CD4-positive, alpha-beta T cell (primary cell): ENCODE measurements at regions of chr11 and their contacts with region 1.

Region 1: DNA sequence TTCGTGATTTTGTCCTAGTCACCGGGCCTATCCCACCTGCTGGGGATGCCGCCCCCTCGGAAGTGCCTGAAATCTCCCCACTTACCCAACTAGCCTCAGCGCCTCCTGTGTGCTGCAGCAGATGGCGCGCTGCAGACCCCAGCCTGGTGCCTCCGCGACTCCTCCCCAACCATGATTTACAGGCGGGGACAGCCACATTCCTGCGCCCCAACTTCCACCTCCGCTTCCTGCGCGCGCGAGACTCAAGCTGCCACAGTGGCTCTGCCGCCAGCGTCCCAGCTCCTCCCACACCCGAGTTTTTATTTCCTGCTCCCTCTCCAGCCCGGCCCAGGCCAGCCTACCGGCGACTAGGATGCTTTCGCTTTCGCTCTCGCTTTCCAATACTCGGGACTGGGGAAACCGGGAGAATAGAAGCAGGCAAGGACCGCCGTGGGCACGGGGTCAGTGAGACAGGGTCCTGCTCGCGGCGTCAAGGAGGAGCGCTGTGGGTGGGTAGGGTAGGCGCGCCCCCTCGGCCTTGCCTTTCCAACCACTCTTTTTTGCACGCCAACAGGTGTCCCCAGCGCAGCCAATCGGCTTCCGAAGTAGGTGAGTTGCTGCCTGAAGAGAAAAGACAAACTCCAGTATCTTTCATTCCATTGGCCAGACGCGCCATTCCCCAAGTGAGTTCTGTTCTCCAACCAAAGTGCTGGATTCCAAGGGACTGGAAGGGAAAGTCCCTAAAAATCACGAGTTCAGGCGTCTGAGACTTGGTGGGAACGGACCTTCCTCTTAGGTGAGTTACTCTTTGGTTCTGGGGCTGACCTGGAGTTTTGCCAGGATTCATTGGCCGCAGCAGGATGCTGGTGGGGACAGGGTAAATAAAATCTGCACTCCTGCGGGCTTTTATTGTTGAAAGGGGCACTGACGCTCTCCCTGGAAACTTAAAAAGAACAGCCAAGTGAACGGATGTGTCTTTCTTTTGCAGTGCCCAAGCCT is at the start of gene FAM111A:
- DNase-seq: peak; percentile 67 to 95 (median 82)
- ATAC-seq: peak; percentile 81
- H3K4me3 ChIP-seq: peak within 1 kb of the TSS; percentile 79
- H3K4me3 Mint-ChIP-seq: peak within 1 kb of the TSS; percentile 94
- H3K27ac ChIP-seq: peak within 1 kb of the TSS; percentile 80 to 91
- H3K27ac Mint-ChIP-seq: peak within 1 kb of the TSS; percentile 90
- H3K4me1 ChIP-seq: peaks cover 23% of the 10 kb centered on the region
- H3K4me1 Mint-ChIP-seq: peaks cover 50% of the 10 kb centered on the region
- H3K27me3 ChIP-seq: no peaks in the 10 kb centered on the region
- H3K27me3 Mint-ChIP-seq: no peaks in the 10 kb centered on the region
- CTCF ChIP-seq: no peak
- total RNA-seq, gene FAM111A: 32.8 to 34.4 TPM

Region 2: GRCh38 chr11:57324886-57325734 is 1817.7 kb before region 1 on chr11 and contains the start of gene TNKS1BP1:
- CTCF ChIA-PET with region 1: no interaction called
- POLR2A ChIA-PET with region 1: no interaction called
- intact Hi-C with region 1: loop called (anchors 10 kb)
- DNase-seq: peak; percentile 76 to 95 (median 87)
- ATAC-seq: peak; percentile 90
- H3K4me3 ChIP-seq: peak within 1 kb of the TSS; percentile 80
- H3K4me3 Mint-ChIP-seq: peak within 1 kb of the TSS; percentile 93
- H3K27ac ChIP-seq: peak within 1 kb of the TSS; percentile 82 to 84
- H3K27ac Mint-ChIP-seq: peak within 1 kb of the TSS; percentile 95
- H3K4me1 ChIP-seq: peaks cover 30% of the 10 kb centered on the region
- H3K4me1 Mint-ChIP-seq: peaks cover 45% of the 10 kb centered on the region
- H3K27me3 ChIP-seq: no peaks in the 10 kb centered on the region
- H3K27me3 Mint-ChIP-seq: no peaks in the 10 kb centered on the region
- CTCF ChIP-seq: no peak
- total RNA-seq, gene TNKS1BP1: 12.9 to 13.2 TPM

Region 3: DNA sequence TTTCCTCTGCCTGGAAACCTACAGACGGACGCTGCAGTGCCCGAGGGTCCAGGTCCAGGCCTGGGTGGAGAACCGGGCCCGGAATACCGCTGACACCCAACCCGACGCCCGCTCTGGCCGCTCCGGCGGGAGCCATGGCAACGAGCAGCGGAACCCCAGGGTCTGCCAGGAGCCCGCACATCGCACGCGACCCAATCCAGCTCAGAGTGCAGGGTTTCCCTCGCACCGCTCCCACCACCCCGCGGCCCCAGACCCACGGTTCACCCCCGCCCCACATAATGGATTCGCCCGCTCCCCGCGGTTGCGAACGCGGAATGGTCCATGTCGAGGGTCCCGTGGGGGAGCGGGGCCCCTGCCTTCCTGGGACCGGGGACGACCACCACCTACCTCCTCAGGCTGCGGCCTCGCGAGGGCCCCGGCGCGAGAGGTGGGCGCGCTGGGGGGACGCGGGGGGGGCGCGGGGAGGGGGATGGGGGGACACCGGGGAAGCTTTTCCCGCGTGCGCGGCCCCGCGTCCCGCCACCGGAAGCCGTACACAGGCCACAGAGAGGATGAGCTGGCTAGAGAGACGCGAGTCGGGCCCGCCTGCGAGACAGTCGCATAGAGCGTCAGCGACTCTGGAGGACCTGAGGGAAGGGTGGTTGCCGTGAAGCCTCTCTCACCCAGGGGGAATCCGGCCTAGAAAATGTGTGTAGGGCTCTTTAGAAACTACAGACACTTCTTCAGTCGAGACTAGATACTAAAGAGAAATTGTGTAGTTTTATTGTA is 1807.3 kb before region 1 on chr11 and contains the start of gene SSRP1:
- CTCF ChIA-PET with region 1: no interaction called
- POLR2A ChIA-PET with region 1: no interaction called
- intact Hi-C with region 1: loop called in 1 of 2 experiments (anchors 10 kb)
- DNase-seq: peak; percentile 77 to 95 (median 86)
- ATAC-seq: peak; percentile 97
- H3K4me3 ChIP-seq: peak within 1 kb of the TSS; percentile 80
- H3K4me3 Mint-ChIP-seq: peak within 1 kb of the TSS; percentile 89
- H3K27ac ChIP-seq: peak within 1 kb of the TSS; percentile 72 to 85
- H3K27ac Mint-ChIP-seq: peak within 1 kb of the TSS; percentile 96
- H3K4me1 ChIP-seq: peaks cover 29% of the 10 kb centered on the region
- H3K4me1 Mint-ChIP-seq: peaks cover 33% of the 10 kb centered on the region
- H3K27me3 ChIP-seq: no peaks in the 10 kb centered on the region
- H3K27me3 Mint-ChIP-seq: no peaks in the 10 kb centered on the region
- CTCF ChIP-seq: no peak
- total RNA-seq, gene SSRP1: 36.7 to 41.2 TPM

Region 4: DNA sequence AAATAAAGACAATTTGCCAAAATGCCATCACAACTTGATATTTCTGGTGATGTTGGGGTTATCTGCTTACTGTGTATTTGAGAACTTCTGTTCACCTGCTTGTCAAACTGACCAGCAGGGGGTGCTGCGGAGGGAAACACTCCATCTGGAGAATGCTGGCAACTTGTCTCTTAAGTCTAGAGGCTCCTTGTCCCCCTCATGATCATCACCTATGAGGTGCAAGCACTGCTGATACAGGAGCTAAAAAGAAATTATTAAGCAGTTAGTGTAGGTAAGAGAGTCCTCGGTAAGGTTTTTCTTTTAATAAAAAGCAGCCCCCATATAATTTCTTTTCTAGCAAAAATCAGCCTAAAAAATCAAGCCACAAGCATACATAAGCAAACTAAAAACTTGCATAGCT is 89.4 kb before region 1 on chr11:
- CTCF ChIA-PET with region 1: interaction called, 12 read pairs
- POLR2A ChIA-PET with region 1: no interaction called
- intact Hi-C with region 1: no loop called
- DNase-seq: peak; percentile 68 to 88 (median 76)
- ATAC-seq: peak; percentile 68
- H3K4me3 ChIP-seq: no peak overlapping the region
- H3K4me3 Mint-ChIP-seq: no peak overlapping the region
- H3K27ac ChIP-seq: no peak overlapping the region
- H3K27ac Mint-ChIP-seq: no peak overlapping the region
- H3K4me1 ChIP-seq: peaks cover 6% of the 10 kb centered on the region
- H3K4me1 Mint-ChIP-seq: peaks cover 7% of the 10 kb centered on the region
- H3K27me3 ChIP-seq: no peaks in the 10 kb centered on the region
- H3K27me3 Mint-ChIP-seq: peaks cover 28% of the 10 kb centered on the region
- CTCF ChIP-seq: peak; percentile 78

Region 5: GRCh38 chr11:59076876-59077571 is 65.8 kb before region 1 on chr11:
- CTCF ChIA-PET with region 1: no interaction called
- POLR2A ChIA-PET with region 1: no interaction called
- intact Hi-C with region 1: no loop called
- DNase-seq: no peak
- ATAC-seq: no peak
- H3K4me3 ChIP-seq: no peak overlapping the region
- H3K4me3 Mint-ChIP-seq: no peak overlapping the region
- H3K27ac ChIP-seq: no peak overlapping the region
- H3K27ac Mint-ChIP-seq: no peak overlapping the region
- H3K4me1 ChIP-seq: no peaks in the 10 kb centered on the region
- H3K4me1 Mint-ChIP-seq: peaks cover 12% of the 10 kb centered on the region
- H3K27me3 ChIP-seq: peaks cover 0 to 14% of the 10 kb centered on the region in 2 experiments
- H3K27me3 Mint-ChIP-seq: peaks cover 56% of the 10 kb centered on the region
- CTCF ChIP-seq: no peak

Region 6: DNA sequence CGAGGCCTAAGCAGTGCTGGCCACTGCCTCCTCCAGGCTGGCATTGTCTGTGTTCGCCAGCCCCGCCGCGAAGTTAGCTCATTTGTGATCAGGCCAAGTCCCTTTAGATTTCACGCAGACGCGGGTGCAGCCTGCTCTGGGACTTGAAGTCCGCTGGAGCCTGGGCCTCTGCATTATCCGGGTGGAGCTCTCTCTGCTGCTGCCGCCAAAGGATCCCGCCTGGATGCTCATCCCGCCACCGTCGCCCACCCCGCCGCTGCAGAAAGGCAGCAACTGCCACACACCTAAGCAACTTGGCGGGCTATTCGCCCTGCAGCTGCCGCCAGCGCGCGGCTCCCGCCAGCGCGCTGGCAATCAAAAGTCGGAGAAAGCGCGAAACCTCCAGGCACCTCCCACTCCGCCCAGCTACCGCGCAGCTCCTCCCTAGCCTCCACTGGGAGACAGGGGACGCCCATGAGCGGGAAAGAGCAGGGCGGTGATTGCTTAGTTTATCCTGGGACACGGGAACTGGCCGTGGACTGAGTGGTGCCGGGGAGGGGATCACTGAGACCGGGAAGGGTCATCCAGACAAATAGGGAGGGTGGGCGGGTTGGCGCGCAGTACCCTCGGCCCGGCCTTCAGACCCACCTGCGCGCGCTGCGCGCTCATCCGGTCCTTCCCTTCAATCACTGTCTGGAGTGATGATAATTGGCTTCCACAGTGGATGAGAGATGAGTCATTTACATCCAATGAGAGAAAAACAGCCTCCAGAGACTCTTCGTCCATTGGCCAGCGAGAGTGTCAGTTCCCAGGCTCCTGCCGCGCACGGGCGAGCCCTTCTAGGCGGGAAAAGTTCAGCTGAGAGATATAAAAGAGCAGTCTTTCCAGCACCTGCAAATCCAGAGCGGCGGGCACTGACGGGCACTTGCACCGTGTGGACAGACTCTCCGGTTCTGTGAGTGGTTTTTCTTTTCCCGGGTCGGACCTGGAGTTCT is 36.2 kb before region 1 on chr11 and contains the start of gene FAM111B:
- CTCF ChIA-PET with region 1: interaction called, 6 read pairs
- POLR2A ChIA-PET with region 1: interaction called, 7 read pairs
- intact Hi-C with region 1: loop called in 1 of 2 experiments (anchors 2 kb)
- DNase-seq: peak; percentile 16 to 85 (median 48)
- ATAC-seq: peak; percentile 82
- H3K4me3 ChIP-seq: peak within 1 kb of the TSS; percentile 68
- H3K4me3 Mint-ChIP-seq: peak within 1 kb of the TSS; percentile 92
- H3K27ac ChIP-seq: no peak within 1 kb of the TSS
- H3K27ac Mint-ChIP-seq: peak within 1 kb of the TSS; percentile 72
- H3K4me1 ChIP-seq: peaks cover 29% of the 10 kb centered on the region
- H3K4me1 Mint-ChIP-seq: peaks cover 38% of the 10 kb centered on the region
- H3K27me3 ChIP-seq: peaks cover 0 to 7% of the 10 kb centered on the region in 2 experiments
- H3K27me3 Mint-ChIP-seq: peaks cover 31% of the 10 kb centered on the region
- CTCF ChIP-seq: no peak
- total RNA-seq, gene FAM111B: 0.82 to 1.2 TPM

Region 7: DNA sequence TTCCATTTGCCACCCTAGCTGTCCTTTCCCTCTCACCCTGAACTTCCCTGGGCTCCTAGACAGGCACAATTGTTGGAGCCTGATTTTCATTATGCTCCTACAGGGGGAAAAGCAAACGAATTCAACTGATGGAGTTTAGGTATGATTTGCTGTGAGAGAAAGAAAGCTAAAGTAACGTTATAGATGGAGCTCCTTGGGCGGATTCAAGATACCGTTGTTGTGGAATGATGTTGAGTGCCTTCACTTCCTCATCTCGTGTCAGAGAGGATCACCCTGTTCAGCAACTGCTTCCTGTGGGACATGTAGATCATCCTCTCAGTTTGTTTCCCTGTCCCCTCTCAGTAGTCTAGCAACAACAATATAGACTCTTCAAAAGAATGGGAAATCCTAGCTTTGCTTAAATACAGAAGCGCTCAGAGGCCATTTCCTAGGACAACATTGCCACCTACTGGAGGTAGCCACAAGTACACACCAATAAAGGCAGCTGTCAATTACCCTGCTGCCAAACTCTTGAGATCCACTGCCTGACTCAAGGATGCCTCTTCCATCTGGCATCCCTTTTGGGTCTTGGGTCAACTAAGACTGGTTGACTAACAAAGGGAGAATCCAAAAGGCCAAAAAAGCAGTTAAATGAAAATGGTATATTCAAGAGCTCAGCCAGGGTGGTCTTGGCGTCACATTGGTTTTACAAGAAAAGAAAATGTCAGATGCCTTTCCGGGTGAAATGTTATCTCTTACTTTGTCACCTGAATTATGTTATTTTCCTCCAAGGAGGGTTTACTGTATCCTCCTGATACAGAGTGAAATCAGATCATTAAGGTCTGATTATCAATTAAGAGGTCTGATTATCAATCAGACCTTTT is 15.6 kb after region 1 on chr11:
- CTCF ChIA-PET with region 1: interaction called, 87 read pairs
- POLR2A ChIA-PET with region 1: interaction called, 19 read pairs
- intact Hi-C with region 1: loop called in 1 of 2 experiments (anchors 1 kb)
- DNase-seq: peak; percentile 34 to 88 (median 48)
- ATAC-seq: peak; percentile 97
- H3K4me3 ChIP-seq: no peak overlapping the region
- H3K4me3 Mint-ChIP-seq: no peak overlapping the region
- H3K27ac ChIP-seq: no peak overlapping the region
- H3K27ac Mint-ChIP-seq: no peak overlapping the region
- H3K4me1 ChIP-seq: no peaks in the 10 kb centered on the region
- H3K4me1 Mint-ChIP-seq: peaks cover 9% of the 10 kb centered on the region
- H3K27me3 ChIP-seq: no peaks in the 10 kb centered on the region
- H3K27me3 Mint-ChIP-seq: peaks cover 9% of the 10 kb centered on the region
- CTCF ChIP-seq: peak; percentile 82

Region 8: DNA sequence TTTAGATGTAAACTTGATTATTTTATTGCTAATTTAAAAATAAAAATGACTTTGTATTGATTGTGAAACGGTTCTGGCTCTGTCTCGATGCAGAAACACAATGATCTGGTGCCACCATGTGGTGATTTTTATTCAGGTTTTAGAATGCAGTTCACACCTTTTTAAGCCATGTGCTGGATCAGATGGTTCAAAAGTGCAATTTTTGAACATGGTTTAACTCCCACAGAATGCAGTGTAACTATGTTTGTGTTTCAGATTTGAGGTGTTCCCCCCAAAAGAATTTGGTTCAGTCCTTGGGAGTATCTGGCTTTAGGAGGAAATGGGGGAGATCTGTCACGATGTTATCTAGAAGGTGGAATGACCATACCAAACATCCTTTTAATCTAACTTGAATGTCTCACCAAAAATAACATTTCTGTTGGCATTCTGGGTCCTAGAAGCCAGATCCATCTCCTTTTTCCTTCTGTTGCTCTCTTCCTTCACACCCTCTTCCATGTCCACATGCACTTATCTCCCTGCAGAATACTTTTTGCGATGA is 659.9 kb after region 1 on chr11:
- CTCF ChIA-PET with region 1: no interaction called
- POLR2A ChIA-PET with region 1: no interaction called
- intact Hi-C with region 1: loop called in 1 of 2 experiments (anchors 10 kb)
- DNase-seq: peak in 7 of 14 experiments; percentile 21 to 82 (median 57)
- ATAC-seq: peak; percentile 85
- H3K4me3 ChIP-seq: no peak overlapping the region
- H3K4me3 Mint-ChIP-seq: no peak overlapping the region
- H3K27ac ChIP-seq: no peak overlapping the region
- H3K27ac Mint-ChIP-seq: no peak overlapping the region
- H3K4me1 ChIP-seq: no peaks in the 10 kb centered on the region
- H3K4me1 Mint-ChIP-seq: no peaks in the 10 kb centered on the region
- H3K27me3 ChIP-seq: no peaks in the 10 kb centered on the region
- H3K27me3 Mint-ChIP-seq: no peaks in the 10 kb centered on the region
- CTCF ChIP-seq: peak; percentile 73